ENCODE measurements at regions of chr19 and their contacts with region 1.

Region 1: GRCh38 chr19:41449079-41449864 is 6.3 kb downstream of the ERICH4 start:
- DNase-seq: peak; percentile 44 to 83 (median 70)
- ATAC-seq: peak; percentile 88 to 92
- H3K4me3 Mint-ChIP-seq: peak overlapping the region; percentile 65 to 85 (median 80)
- H3K27ac Mint-ChIP-seq: peak overlapping the region in 5 of 10 donors; percentile 20 to 73 (median 63)
- H3K4me1 Mint-ChIP-seq: peaks cover 6 to 16% (median 12%) of the 10 kb centered on the region in 4 donors
- H3K27me3 Mint-ChIP-seq: peaks cover 2 to 31% (median 10%) of the 10 kb centered on the region in 5 donors

Region 2: GRCh38 chr19:41484822-41485221 is 35.5 kb after region 1 on chr19:
- POLR2A ChIA-PET with region 1: no interaction called
- DNase-seq: no peak
- ATAC-seq: no peak
- H3K4me3 Mint-ChIP-seq: no peak overlapping the region
- H3K27ac Mint-ChIP-seq: peak overlapping the region in 1 of 10 donors; percentile 45
- H3K4me1 Mint-ChIP-seq: no peaks in the 10 kb centered on the region
- H3K27me3 Mint-ChIP-seq: peaks cover 26 to 76% (median 47%) of the 10 kb centered on the region in 5 donors

Region 3: DNA sequence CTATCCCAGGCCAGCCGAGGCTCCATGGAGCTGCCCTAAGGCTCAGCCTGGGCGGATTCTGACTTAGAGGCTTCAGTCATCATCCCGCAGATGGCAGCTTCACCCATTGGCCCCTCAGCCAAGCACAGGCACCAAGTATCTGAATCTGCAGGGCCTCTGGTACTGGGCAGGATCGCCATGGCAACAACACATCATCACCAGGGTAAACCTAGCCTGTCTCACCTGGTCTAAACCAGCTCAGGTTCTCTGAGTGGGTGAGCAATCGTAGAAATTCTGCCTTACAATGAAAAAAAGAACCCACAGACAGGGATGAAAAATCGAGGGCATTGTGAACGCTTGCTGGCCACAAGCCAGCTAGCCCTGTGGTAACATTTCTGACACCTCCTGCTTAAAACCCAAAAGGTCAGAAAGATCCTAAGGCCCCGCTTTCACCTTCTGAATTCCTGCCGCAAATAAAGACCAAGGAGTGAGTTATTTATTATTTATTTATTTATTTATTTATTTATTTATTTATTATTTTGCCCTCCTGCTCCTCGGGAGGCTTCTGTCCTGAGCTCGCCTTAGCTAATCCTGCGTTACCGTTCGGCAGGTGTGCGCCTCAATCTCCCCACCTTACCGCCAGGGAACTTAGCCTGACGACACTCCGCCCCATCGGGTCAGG is 114.7 kb after region 1 on chr19:
- POLR2A ChIA-PET with region 1: interaction called, 16 read pairs
- DNase-seq: peak; percentile 39 to 92 (median 74)
- ATAC-seq: peak; percentile 86 to 92
- H3K4me3 Mint-ChIP-seq: peak overlapping the region; percentile 79 to 91 (median 86)
- H3K27ac Mint-ChIP-seq: peak overlapping the region; percentile 87 to 99 (median 96)
- H3K4me1 Mint-ChIP-seq: peaks cover 39 to 91% (median 79%) of the 10 kb centered on the region in 4 donors
- H3K27me3 Mint-ChIP-seq: peaks cover 0 to 2% (median 0%) of the 10 kb centered on the region in 5 donors

Region 4: DNA sequence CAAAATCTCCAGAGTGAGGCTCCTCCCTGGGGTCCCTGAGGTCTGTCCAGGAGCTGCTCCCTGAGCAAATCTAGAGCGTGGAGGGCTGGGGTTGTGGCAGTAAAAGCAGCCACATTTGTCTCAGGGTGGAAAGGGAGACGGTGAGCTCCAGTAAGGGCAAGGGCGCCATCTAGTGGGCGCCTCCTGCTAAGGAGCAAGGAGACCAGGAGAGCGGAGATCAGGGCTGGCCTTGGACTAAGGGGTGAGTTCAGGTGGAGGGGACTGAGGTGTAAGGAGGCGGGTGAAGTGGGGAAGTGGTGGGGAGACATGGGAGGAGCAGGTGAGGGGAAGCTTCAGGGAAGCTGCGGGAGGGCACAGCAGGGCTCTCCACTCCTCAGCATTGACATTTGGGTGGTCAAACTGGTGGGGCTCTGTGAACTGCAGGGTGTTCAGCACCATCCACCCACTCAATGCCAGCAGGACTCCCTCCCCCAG is 121.4 kb after region 1 on chr19:
- POLR2A ChIA-PET with region 1: interaction called, 10 read pairs
- DNase-seq: peak; percentile 69 to 92 (median 83)
- ATAC-seq: peak; percentile 98 to 99
- H3K4me3 Mint-ChIP-seq: peak overlapping the region in 2 of 10 donors; percentile 42 to 63
- H3K27ac Mint-ChIP-seq: peak overlapping the region in 7 of 10 donors; percentile 41 to 90 (median 74)
- H3K4me1 Mint-ChIP-seq: peaks cover 17 to 53% (median 47%) of the 10 kb centered on the region in 4 donors
- H3K27me3 Mint-ChIP-seq: peaks cover 0 to under 1% (median 0%) of the 10 kb centered on the region in 5 donors

Measured in naive thymus-derived CD8-positive, alpha-beta T cell (primary cell).